SK-N-SH (cell line): ENCODE measurements at regions of chr7 and their contacts with region 1.

Region 1: GRCh38 chr7:32846701-32847100 is 44.9 kb downstream of the KBTBD2 start:
- DNase-seq: peak; percentile 72
- H3K4me3 ChIP-seq: peak overlapping the region in 1 of 2 experiments; percentile 46; a peak in 2 of 4 replicates
- H3K27ac ChIP-seq: no peak overlapping the region
- H3K4me1 ChIP-seq: peaks cover 0 to 3% of the 10 kb centered on the region in 2 experiments; a peak in 1 of 4 replicates
- H3K27me3 ChIP-seq: no peaks in the 10 kb centered on the region
- CTCF ChIP-seq: peak; percentile 90
- EP300 ChIP-seq: no peak
- RAD21 ChIP-seq: peak; percentile 71

Region 2: DNA sequence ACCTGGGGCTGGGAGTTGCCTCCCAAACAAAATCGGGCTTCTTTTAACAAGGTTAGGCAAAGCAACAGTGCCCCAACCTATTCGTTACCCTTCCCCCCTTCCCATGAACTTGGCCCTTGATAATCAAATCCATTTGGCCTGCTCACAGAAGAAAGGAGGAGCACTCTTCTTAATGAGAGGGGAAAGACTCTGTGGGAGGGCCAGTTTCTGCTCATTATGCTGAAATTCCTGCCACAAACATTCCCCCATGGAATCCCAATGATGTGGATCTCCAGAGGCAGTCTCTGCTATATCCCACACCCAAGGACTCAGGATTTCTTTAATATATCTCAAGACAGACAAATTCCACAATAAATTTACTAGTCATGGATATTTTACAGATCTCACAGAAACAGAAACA is 399.5 kb before region 1 on chr7:
- CTCF ChIA-PET with region 1: no interaction called
- POLR2A ChIA-PET with region 1: no interaction called
- DNase-seq: no peak
- H3K4me3 ChIP-seq: no peak overlapping the region
- H3K27ac ChIP-seq: no peak overlapping the region
- H3K4me1 ChIP-seq: no peaks in the 10 kb centered on the region
- H3K27me3 ChIP-seq: peaks cover 12% of the 10 kb centered on the region; the same call in 1 of the 2 replicates
- CTCF ChIP-seq: no peak
- EP300 ChIP-seq: no peak
- RAD21 ChIP-seq: no peak

Region 3: GRCh38 chr7:32803406-32804141 is 43.1 kb before region 1 on chr7:
- CTCF ChIA-PET with region 1: interaction called, 16 read pairs
- POLR2A ChIA-PET with region 1: no interaction called
- DNase-seq: no peak
- H3K4me3 ChIP-seq: no peak overlapping the region
- H3K27ac ChIP-seq: no peak overlapping the region
- H3K4me1 ChIP-seq: no peaks in the 10 kb centered on the region; a peak in 1 of 4 replicates
- H3K27me3 ChIP-seq: no peaks in the 10 kb centered on the region
- CTCF ChIP-seq: no peak
- EP300 ChIP-seq: no peak
- RAD21 ChIP-seq: no peak

Region 4: GRCh38 chr7:32858648-32859047 is 11.9 kb after region 1 on chr7:
- CTCF ChIA-PET with region 1: interaction called, 17 read pairs
- POLR2A ChIA-PET with region 1: no interaction called
- DNase-seq: no peak
- H3K4me3 ChIP-seq: no peak overlapping the region
- H3K27ac ChIP-seq: no peak overlapping the region
- H3K4me1 ChIP-seq: no peaks in the 10 kb centered on the region; a peak in 1 of 4 replicates
- H3K27me3 ChIP-seq: no peaks in the 10 kb centered on the region
- CTCF ChIP-seq: no peak
- EP300 ChIP-seq: no peak
- RAD21 ChIP-seq: no peak

Region 5: GRCh38 chr7:32879460-32879859 is 32.8 kb after region 1 on chr7:
- CTCF ChIA-PET with region 1: interaction called, 18 read pairs
- POLR2A ChIA-PET with region 1: no interaction called
- DNase-seq: no peak
- H3K4me3 ChIP-seq: no peak overlapping the region
- H3K27ac ChIP-seq: peak overlapping the region; percentile 12 to 60; a peak in 2 of 4 replicates
- H3K4me1 ChIP-seq: peaks cover 2 to 30% of the 10 kb centered on the region in 2 experiments; a peak in 3 of 4 replicates
- H3K27me3 ChIP-seq: no peaks in the 10 kb centered on the region
- CTCF ChIP-seq: no peak
- EP300 ChIP-seq: no peak
- RAD21 ChIP-seq: no peak

Region 6: GRCh38 chr7:32937344-32938174 is 90.9 kb after region 1 on chr7:
- CTCF ChIA-PET with region 1: interaction called, 48 read pairs
- POLR2A ChIA-PET with region 1: no interaction called
- DNase-seq: peak; percentile 82
- H3K4me3 ChIP-seq: no peak overlapping the region
- H3K27ac ChIP-seq: peak overlapping the region; percentile 10 to 66; a peak in 3 of 4 replicates
- H3K4me1 ChIP-seq: peaks cover 15 to 18% of the 10 kb centered on the region in 2 experiments; a peak in 3 of 4 replicates
- H3K27me3 ChIP-seq: no peaks in the 10 kb centered on the region
- CTCF ChIP-seq: no peak
- EP300 ChIP-seq: no peak; a peak in 1 of 4 replicates
- RAD21 ChIP-seq: peak; percentile 1; the same call in 1 of the 2 replicates

Region 7: GRCh38 chr7:32957326-32958045 is 110.8 kb after region 1 on chr7 and contains the start of gene FKBP9:
- CTCF ChIA-PET with region 1: interaction called, 12 read pairs
- POLR2A ChIA-PET with region 1: no interaction called
- DNase-seq: peak; percentile 99
- H3K4me3 ChIP-seq: peak within 1 kb of the TSS; percentile 81 to 89
- H3K27ac ChIP-seq: peak within 1 kb of the TSS; percentile 65 to 92
- H3K4me1 ChIP-seq: peaks cover 0 to 13% of the 10 kb centered on the region in 2 experiments; a peak in 1 of 4 replicates
- H3K27me3 ChIP-seq: no peaks in the 10 kb centered on the region
- CTCF ChIP-seq: no peak
- EP300 ChIP-seq: 0 out of 4 replicates have a peak, but pooled peaks of 1 of the 2 experiments have one; percentile 8
- RAD21 ChIP-seq: no peak
- polyA plus RNA-seq, gene FKBP9: 211 and 219 TPM in 2 replicates

Region 8: GRCh38 chr7:33109005-33109757 is 262.5 kb after region 1 on chr7 and contains the start of gene RP9:
- CTCF ChIA-PET with region 1: interaction called, 39 read pairs
- POLR2A ChIA-PET with region 1: no interaction called
- DNase-seq: peak; percentile 99
- H3K4me3 ChIP-seq: peak within 1 kb of the TSS; percentile 85 to 95
- H3K27ac ChIP-seq: peak within 1 kb of the TSS; percentile 57 to 80
- H3K4me1 ChIP-seq: peaks cover 5 to 15% of the 10 kb centered on the region in 2 experiments; a peak in 3 of 4 replicates
- H3K27me3 ChIP-seq: no peaks in the 10 kb centered on the region
- CTCF ChIP-seq: peak; percentile 61
- EP300 ChIP-seq: peak in 1 of 2 experiments; percentile 75; a peak in 1 of 4 replicates
- RAD21 ChIP-seq: peak; percentile 38
- polyA plus RNA-seq, gene RP9: 31.6 and 32.0 TPM in 2 replicates

Region 9: DNA sequence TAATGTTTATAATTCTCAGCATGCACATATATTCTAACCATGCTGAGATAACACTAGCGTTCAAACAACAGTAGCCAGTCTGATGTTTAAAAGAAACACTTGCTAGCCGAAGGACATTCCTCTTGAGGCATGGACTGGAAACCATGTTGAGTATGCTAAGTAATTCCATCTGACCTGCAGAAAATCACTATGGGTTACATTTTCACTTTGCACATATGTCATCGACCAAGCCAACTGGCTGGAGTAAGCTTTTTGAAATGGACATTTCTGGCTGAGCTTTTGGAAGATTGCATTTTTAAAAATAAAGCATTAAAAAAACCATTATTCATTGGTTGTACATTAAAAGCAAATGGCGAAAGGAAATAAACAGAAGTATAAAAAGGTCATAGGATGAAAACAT is 370.9 kb after region 1 on chr7:
- CTCF ChIA-PET with region 1: no interaction called
- POLR2A ChIA-PET with region 1: no interaction called
- DNase-seq: no peak
- H3K4me3 ChIP-seq: no peak overlapping the region
- H3K27ac ChIP-seq: no peak overlapping the region
- H3K4me1 ChIP-seq: no peaks in the 10 kb centered on the region
- H3K27me3 ChIP-seq: no peaks in the 10 kb centered on the region
- CTCF ChIP-seq: no peak
- EP300 ChIP-seq: no peak
- RAD21 ChIP-seq: no peak